ENCODE measurements at regions of chr10 and their contacts with region 1.

Region 1: DNA sequence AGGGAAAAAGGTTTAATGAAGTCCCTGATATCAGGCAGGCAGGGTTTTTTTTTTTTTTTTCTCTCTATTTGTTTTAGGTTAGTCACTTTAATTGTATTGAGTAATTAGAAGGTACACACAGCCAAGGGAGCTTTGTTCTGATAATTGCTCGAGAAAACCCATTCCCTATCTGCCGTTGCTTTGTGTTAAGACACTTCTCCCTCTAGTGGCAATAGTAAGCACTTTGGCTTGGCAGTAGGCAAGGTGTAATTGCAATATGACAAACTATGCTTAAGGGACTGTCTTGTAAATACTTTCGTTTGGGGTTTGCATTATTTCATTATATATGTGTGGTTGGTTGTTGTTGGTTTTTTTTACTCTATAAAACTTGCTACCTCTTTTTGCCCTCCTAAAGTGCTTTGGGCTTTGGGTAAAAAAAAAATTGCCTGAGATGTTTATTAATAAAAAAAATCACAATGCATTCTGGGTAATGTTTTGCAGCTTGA is 113.4 kb downstream of the BTRC start:
- DNase-seq: peak; percentile 84
- H3K4me3 ChIP-seq: no peak overlapping the region
- H3K27ac ChIP-seq: no peak overlapping the region
- H3K4me1 ChIP-seq: no peaks in the 10 kb centered on the region
- H3K27me3 ChIP-seq: no peaks in the 10 kb centered on the region
- CTCF ChIP-seq: peak; percentile 67 to 75
- POLR2A ChIP-seq: no peak

Region 2: GRCh38 chr10:101189541-101190401 is 277.6 kb before region 1 on chr10:
- CTCF ChIA-PET with region 1: no interaction called
- POLR2A ChIA-PET with region 1: no interaction called
- dilution Hi-C with region 1: no loop called
- intact Hi-C with region 1: no loop called
- DNase-seq: no peak
- H3K4me3 ChIP-seq: no peak overlapping the region
- H3K27ac ChIP-seq: no peak overlapping the region
- H3K4me1 ChIP-seq: no peaks in the 10 kb centered on the region
- H3K27me3 ChIP-seq: peaks cover 2 to 3% of the 10 kb centered on the region in 2 experiments
- CTCF ChIP-seq: no peak
- POLR2A ChIP-seq: no peak

Region 3: GRCh38 chr10:101291331-101292193 is 175.8 kb before region 1 on chr10:
- CTCF ChIA-PET with region 1: interaction called, 156 read pairs
- POLR2A ChIA-PET with region 1: no interaction called
- dilution Hi-C with region 1: no loop called
- intact Hi-C with region 1: no loop called
- DNase-seq: peak; percentile 33
- H3K4me3 ChIP-seq: peak overlapping the region in 2 of 3 experiments; percentile 32 to 46
- H3K27ac ChIP-seq: no peak overlapping the region
- H3K4me1 ChIP-seq: peaks cover 2% of the 10 kb centered on the region
- H3K27me3 ChIP-seq: peaks cover 54 to 56% of the 10 kb centered on the region in 2 experiments
- CTCF ChIP-seq: peak; percentile 61 to 90
- POLR2A ChIP-seq: no peak

Region 4: GRCh38 chr10:101353692-101354327 is 113.5 kb before region 1 on chr10 and contains the start of gene BTRC:
- CTCF ChIA-PET with region 1: interaction called, 19 read pairs
- POLR2A ChIA-PET with region 1: no interaction called
- dilution Hi-C with region 1: no loop called
- intact Hi-C with region 1: no loop called
- DNase-seq: peak; percentile 100
- H3K4me3 ChIP-seq: peak within 1 kb of the TSS; percentile 76 to 97 (median 78)
- H3K27ac ChIP-seq: peak within 1 kb of the TSS; percentile 61
- H3K4me1 ChIP-seq: peaks cover 11% of the 10 kb centered on the region
- H3K27me3 ChIP-seq: peaks cover 5 to 6% of the 10 kb centered on the region in 2 experiments
- CTCF ChIP-seq: no peak
- POLR2A ChIP-seq: peak; percentile 72
- total RNA-seq, gene BTRC: 18.5 and 19.7 TPM in 2 replicates

Region 5: DNA sequence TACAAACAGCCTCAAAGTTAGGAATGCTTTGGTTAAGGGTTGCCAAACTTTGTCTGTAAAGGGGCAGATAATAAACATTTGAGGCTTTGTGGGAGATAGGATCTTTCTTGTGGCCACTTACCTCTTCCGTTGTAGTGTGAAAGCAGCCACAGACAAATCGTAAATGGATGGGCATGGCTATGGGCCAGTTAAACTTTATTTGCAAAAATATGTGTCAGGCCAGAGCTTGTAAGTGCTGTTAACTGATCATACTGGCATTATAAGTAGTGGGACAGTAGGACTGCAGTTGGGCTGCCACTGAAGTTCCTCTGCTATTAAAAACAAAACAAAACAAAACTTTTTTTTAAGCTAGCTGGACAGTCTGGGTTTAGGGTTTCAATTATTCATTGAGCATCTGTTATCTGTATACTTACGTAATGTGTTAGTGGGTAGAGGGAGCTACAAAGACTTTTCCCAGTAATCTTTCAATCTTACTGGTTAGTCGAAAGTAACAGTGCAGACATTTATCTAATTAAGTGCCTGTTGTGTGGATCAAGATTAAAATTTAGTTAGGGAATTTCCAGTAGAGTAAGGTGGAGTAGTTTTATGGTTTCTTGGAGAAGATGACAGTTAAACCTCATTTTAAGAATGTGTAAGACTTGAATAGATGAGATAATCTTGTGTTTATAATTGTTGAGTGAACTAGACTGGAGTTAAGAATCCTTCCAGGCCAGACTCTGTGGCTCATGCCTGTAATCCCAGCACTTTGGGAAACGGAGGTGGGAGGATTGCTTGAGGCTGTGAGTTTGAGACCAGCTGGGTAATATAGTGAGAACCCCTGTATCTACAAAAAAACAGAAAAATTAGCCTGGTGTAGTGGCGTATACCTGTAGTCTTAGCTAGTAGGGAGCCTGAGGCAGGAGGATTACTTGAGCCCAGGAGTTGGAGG is 13.3 kb before region 1 on chr10:
- CTCF ChIA-PET with region 1: interaction called, 93 read pairs
- POLR2A ChIA-PET with region 1: no interaction called
- dilution Hi-C with region 1: no loop called
- intact Hi-C with region 1: no loop called
- DNase-seq: no peak
- H3K4me3 ChIP-seq: no peak overlapping the region
- H3K27ac ChIP-seq: no peak overlapping the region
- H3K4me1 ChIP-seq: no peaks in the 10 kb centered on the region
- H3K27me3 ChIP-seq: no peaks in the 10 kb centered on the region
- CTCF ChIP-seq: no peak
- POLR2A ChIP-seq: no peak

Region 6: DNA sequence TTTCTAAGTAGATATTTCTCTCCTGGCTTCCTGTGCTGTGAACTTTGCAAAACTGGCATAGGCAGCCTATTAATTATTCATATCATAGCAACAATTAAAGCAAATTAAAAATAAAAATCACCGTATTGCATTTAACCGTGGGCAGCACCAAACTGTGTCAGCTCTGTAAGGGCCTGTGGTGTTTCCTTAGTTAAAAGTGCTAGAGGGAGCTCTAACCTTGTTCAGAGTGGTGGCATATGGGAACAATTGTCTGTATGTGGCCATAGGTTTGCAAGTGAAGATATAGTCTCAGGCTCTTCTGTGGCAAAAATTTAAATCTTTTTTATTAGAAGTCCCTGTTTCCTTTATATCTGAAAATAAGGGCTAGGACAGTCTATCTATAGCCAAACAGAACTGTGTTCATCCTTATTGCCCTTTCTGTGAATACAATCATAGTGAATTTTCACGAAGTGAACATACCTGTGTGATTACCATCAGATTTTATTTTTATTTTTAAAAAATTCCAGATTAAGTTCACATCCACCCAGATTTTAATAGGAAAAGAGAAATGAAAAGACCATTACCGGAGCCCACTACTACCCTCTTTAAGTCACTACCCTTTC is 28.1 kb after region 1 on chr10:
- CTCF ChIA-PET with region 1: interaction called, 15 read pairs
- POLR2A ChIA-PET with region 1: no interaction called
- dilution Hi-C with region 1: no loop called
- intact Hi-C with region 1: no loop called
- DNase-seq: peak; percentile 34
- H3K4me3 ChIP-seq: no peak overlapping the region
- H3K27ac ChIP-seq: no peak overlapping the region
- H3K4me1 ChIP-seq: no peaks in the 10 kb centered on the region
- H3K27me3 ChIP-seq: no peaks in the 10 kb centered on the region
- CTCF ChIP-seq: peak in 1 of 2 donors; percentile 33
- POLR2A ChIP-seq: no peak

Region 7: GRCh38 chr10:101536800-101537199 is 69.5 kb after region 1 on chr10:
- CTCF ChIA-PET with region 1: interaction called, 12 read pairs
- POLR2A ChIA-PET with region 1: no interaction called
- dilution Hi-C with region 1: no loop called
- intact Hi-C with region 1: no loop called
- DNase-seq: peak; percentile 18
- H3K4me3 ChIP-seq: no peak overlapping the region
- H3K27ac ChIP-seq: no peak overlapping the region
- H3K4me1 ChIP-seq: peaks cover 15% of the 10 kb centered on the region
- H3K27me3 ChIP-seq: no peaks in the 10 kb centered on the region
- CTCF ChIP-seq: peak; percentile 20 to 31
- POLR2A ChIP-seq: no peak

Region 8: DNA sequence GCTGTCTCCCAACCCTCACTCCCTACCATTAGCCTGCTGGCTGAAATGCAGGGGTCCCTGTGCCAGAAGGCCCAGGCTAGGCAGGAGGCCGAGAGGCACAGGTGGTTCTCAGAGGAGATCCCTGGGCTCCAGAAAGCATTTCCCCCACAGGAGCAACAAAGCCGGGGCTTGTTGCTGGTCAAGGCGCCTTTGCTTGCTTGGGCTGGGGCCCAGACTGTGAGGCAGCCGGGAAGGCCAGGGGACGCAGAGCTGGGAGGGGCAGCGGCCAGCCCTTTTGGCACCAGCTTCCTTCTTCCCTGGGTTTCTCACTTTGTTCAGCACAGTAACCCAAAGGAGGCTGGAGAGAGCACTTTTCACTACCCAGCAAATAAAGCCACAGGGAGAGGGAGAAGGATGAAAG is 179.0 kb after region 1 on chr10:
- CTCF ChIA-PET with region 1: no interaction called
- POLR2A ChIA-PET with region 1: no interaction called
- dilution Hi-C with region 1: no loop called
- intact Hi-C with region 1: no loop called
- DNase-seq: no peak
- H3K4me3 ChIP-seq: no peak overlapping the region
- H3K27ac ChIP-seq: no peak overlapping the region
- H3K4me1 ChIP-seq: no peaks in the 10 kb centered on the region
- H3K27me3 ChIP-seq: no peaks in the 10 kb centered on the region
- CTCF ChIP-seq: no peak
- POLR2A ChIP-seq: no peak

Region 9: DNA sequence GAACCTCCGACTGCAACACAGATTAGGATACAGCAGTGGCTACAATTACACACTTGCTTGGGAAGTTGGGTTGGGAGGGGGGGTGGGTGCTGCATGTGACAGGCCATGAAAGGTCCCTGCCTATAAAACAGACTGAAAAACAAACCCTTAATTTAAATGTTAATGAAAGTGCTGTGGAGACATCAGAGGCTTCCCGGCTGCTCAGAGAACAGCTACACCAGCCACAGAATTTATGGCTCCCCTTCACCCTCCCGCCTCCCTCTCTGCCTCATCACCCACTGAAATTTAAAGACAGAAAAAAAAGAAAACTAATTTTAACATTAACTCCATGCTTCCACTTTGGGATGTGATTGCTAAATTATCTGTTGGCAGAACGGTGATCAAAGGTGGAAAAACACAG is 192.9 kb after region 1 on chr10:
- CTCF ChIA-PET with region 1: no interaction called
- POLR2A ChIA-PET with region 1: no interaction called
- dilution Hi-C with region 1: no loop called
- intact Hi-C with region 1: no loop called
- DNase-seq: no peak
- H3K4me3 ChIP-seq: no peak overlapping the region
- H3K27ac ChIP-seq: no peak overlapping the region
- H3K4me1 ChIP-seq: no peaks in the 10 kb centered on the region
- H3K27me3 ChIP-seq: no peaks in the 10 kb centered on the region
- CTCF ChIP-seq: no peak
- POLR2A ChIP-seq: no peak

Region 10: GRCh38 chr10:102159051-102159597 is 691.8 kb after region 1 on chr10:
- CTCF ChIA-PET with region 1: no interaction called
- POLR2A ChIA-PET with region 1: no interaction called
- dilution Hi-C with region 1: no loop called
- intact Hi-C with region 1: no loop called
- DNase-seq: no peak
- H3K4me3 ChIP-seq: no peak overlapping the region
- H3K27ac ChIP-seq: no peak overlapping the region
- H3K4me1 ChIP-seq: no peaks in the 10 kb centered on the region
- H3K27me3 ChIP-seq: no peaks in the 10 kb centered on the region
- CTCF ChIP-seq: no peak
- POLR2A ChIP-seq: no peak

Measured in endothelial cell of umbilical vein (primary cell).